ENCODE measurements at regions of chr1 and their contacts with region 1.

Region 1: GRCh38 chr1:26472901-26473845 is 933 bp downstream of the HMGN2 start:
- DNase-seq: peak; percentile 93 to 99 (median 98)

Region 2: GRCh38 chr1:26431979-26432695 is 41.0 kb before region 1 on chr1 and contains the start of gene DHDDS:
- intact Hi-C with region 1: loop called (anchors 5 kb)
- DNase-seq: peak; percentile 95 to 100 (median 99)

Measured in head of caudate nucleus (tissue), 42 donors.